Naive thymus-derived CD4-positive, alpha-beta T cell (primary cell): ENCODE measurements at regions of chr6 and their contacts with region 1.

Region 1: DNA sequence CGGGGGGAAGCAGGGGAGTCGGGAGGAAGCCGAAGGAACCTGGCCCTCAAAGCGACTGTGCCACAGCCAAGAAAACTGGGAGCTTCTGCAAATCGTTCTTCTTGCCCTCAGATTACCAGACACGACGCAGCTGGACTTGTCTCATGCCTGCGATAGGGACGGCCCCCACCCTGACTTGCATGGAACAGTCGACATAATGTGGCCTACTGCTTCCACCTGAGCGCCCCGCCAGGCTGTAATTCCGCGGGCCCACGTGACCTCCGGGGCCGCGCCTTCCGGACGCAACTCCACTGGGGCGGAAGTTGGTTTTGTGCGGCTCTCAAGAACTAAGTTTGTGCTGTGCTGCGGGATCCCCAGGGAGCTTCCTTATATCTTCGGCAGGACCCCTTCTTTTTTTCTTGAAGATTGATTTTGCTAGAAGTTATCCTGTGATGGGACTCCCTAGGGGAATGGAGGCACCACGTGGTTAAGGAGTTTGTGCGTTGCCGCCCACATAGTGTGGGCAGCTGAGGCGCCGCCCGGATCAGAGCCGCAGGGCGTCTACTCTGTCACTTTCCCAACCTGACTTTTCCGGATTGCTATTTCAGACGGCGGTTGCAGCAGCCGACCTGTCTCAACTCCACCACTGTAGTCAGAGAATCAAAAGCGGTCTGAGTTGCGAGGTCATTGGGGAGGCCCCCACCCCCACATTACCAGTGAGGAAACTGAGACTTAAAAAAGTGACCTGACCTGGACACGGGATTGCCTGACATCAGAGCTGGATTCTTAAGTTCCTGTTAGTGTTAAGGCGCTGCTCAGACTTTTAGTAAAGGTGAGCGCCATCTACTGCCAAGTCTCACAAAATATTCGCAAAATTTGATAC is 540 bp upstream of the CD164 start:
- DNase-seq: peak; percentile 90 to 97 (median 96)
- ATAC-seq: peak; percentile 82
- H3K4me3 ChIP-seq: peak overlapping the region; percentile 89
- H3K4me3 Mint-ChIP-seq: peak overlapping the region; percentile 88 to 99 (median 98)
- H3K27ac ChIP-seq: peak overlapping the region; percentile 95
- H3K27ac Mint-ChIP-seq: peak overlapping the region; percentile 92 to 100 (median 99)
- H3K4me1 ChIP-seq: peaks cover 22 to 32% of the 10 kb centered on the region in 2 donors
- H3K4me1 Mint-ChIP-seq: peaks cover 34 to 58% (median 51%) of the 10 kb centered on the region in 7 donors
- H3K27me3 ChIP-seq: no peaks in the 10 kb centered on the region
- H3K27me3 Mint-ChIP-seq: peaks cover 0 to 7% (median 0%) of the 10 kb centered on the region in 5 donors

Region 2: DNA sequence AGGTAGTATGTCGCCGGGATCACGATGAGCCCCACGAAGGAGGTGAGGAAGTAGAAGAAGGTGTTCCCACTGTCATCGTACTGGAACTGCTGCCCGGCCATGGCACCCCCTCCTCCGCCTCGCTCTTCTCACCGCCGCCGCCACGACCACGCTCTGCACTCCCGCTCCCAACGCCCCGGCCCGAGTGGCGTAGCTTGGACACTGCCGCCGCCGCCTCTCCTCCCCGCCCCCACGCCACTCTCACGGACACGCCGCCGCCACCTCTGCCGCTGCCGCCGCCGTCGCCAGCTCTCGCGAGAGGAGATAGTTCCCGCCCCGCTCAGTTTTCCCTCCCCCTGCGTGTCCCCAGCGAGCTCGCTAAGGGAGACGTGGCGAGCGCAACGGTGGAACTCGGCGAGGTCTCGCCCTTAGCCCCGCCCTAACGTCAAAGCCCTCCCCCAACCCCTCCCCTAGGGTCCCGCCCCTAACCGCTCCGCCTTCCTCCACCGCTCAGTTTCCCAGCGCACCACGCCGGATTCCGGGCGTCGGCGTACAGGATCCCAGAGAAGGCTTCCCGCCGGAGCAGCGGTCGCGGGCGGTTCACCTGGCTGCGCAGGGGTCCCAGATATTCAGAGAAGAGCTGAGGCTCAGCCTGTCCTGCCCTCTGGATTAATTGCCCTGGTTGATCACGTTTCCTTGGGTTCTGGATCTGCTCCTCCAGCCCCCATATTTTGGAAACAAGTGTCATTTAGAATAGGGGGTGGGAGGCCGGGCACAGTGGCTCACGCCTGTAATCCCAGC is 1424.7 kb before region 1 on chr6 and contains the start of gene SEC63:
- CTCF ChIA-PET with region 1: no interaction called
- POLR2A ChIA-PET with region 1: no interaction called
- intact Hi-C with region 1: loop called (anchors 1 to 2 kb)
- DNase-seq: peak; percentile 92 to 97 (median 96)
- ATAC-seq: peak; percentile 100
- H3K4me3 ChIP-seq: peak within 1 kb of the TSS; percentile 96
- H3K4me3 Mint-ChIP-seq: peak within 1 kb of the TSS; percentile 94 to 100 (median 99)
- H3K27ac ChIP-seq: peak within 1 kb of the TSS; percentile 86
- H3K27ac Mint-ChIP-seq: peak within 1 kb of the TSS; percentile 80 to 98 (median 96)
- H3K4me1 ChIP-seq: peaks cover 15 to 17% of the 10 kb centered on the region in 2 donors
- H3K4me1 Mint-ChIP-seq: peaks cover 20 to 35% (median 29%) of the 10 kb centered on the region in 7 donors
- H3K27me3 ChIP-seq: no peaks in the 10 kb centered on the region
- H3K27me3 Mint-ChIP-seq: peaks cover 0 to 5% (median 0%) of the 10 kb centered on the region in 5 donors
- total RNA-seq, gene SEC63: 82.9 to 89.0 (median 86.0) TPM

Region 3: DNA sequence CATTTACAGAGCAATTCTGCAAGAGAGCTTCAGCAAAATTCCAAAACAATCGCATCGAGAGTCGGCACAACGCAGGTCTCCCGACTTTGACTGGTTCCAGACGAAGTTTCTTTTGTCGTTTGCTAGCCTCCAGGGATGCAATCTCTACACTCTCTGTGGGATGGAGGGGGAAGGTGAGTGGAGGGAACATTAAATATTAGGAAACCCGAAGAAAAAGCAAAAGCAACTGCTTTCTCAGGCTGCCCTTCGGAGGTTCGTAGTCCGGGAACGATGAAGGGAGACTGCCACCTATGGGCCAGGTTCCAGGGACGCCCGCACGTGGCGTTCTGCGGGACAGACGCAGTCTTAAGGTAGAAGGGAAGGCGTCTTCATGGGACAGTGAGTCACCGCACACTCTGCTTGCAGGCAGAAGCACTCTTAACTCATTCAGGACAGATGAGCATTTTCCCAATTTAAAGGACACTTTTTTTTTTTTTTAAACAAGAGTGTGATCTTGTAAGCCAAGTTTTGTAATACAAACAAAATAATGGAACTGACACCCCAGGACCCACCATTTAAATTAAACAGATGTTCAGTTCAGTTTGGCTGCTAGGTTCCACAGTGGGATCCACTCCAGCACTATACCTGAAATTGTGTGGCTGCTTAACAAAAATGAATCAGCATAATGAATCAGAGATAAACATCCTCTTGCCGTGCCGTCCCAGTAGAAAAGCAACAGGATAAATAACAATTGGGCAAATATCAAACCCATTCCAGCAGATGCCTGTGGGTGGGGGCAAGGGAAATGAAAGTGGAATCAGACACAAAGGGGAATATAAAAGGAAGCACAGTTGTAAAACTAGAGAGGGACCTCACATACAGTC is 600.4 kb before region 1 on chr6:
- CTCF ChIA-PET with region 1: no interaction called
- POLR2A ChIA-PET with region 1: no interaction called
- intact Hi-C with region 1: loop called in 1 of 2 experiments (anchors 2 kb)
- DNase-seq: peak; percentile 56 to 76 (median 71)
- ATAC-seq: peak; percentile 98
- H3K4me3 ChIP-seq: peak overlapping the region; percentile 52
- H3K4me3 Mint-ChIP-seq: peak overlapping the region; percentile 46 to 93 (median 87)
- H3K27ac ChIP-seq: no peak overlapping the region
- H3K27ac Mint-ChIP-seq: peak overlapping the region in 3 of 9 donors; percentile 47 to 64 (median 51)
- H3K4me1 ChIP-seq: no peaks in the 10 kb centered on the region
- H3K4me1 Mint-ChIP-seq: peaks cover 0 to 17% (median 10%) of the 10 kb centered on the region in 7 donors
- H3K27me3 ChIP-seq: no peaks in the 10 kb centered on the region
- H3K27me3 Mint-ChIP-seq: peaks cover 0 to 73% (median 5%) of the 10 kb centered on the region in 5 donors

Region 4: DNA sequence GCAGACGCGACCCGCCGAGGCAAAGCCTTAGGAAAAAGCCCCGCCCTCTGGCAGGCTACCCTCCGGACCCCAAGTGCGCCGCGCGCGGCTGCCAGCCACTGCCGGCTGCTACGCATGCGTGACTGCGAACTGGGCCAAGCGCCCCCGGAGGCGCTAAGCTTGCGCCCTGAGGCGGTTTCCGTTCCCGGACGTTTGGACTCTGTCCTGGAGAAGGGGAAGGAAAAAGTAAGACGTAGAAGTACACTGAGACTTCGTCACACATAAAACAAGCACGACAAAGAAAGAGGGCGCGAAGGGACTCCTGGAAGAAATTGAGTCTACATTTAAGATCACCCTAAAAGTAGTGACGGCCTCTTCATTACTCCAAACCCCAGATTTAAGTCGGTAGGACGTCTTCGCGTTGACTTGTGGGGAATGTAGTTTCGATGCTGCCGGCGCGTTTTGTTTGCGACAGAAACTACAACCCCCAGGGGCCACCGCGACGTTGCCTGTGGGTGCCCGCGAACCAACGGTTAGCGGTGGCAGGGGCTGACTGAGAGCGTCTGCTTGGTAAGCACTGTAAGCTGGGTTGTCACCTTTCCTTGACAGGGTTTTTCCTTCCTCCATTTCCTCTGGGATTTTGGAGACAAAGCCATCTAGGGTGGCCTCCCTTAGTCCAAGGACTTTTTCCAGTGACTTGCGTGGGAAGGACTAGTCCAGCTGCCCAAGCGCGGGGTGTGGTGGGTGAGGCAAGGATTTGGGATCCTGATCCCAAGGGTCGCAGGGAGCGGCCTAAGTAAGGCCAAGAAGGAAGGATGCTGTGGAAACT is 287.6 kb before region 1 on chr6 and contains the start of gene CEP57L1:
- CTCF ChIA-PET with region 1: no interaction called
- POLR2A ChIA-PET with region 1: interaction called, 34 read pairs
- intact Hi-C with region 1: loop called (anchors 1 kb)
- DNase-seq: peak; percentile 88 to 96 (median 94)
- ATAC-seq: peak; percentile 81
- H3K4me3 ChIP-seq: peak within 1 kb of the TSS; percentile 96
- H3K4me3 Mint-ChIP-seq: peak within 1 kb of the TSS; percentile 92 to 98 (median 96)
- H3K27ac ChIP-seq: peak within 1 kb of the TSS; percentile 94
- H3K27ac Mint-ChIP-seq: peak within 1 kb of the TSS; percentile 98 to 99 (median 99)
- H3K4me1 ChIP-seq: peaks cover 21 to 29% of the 10 kb centered on the region in 2 donors
- H3K4me1 Mint-ChIP-seq: peaks cover 26 to 64% (median 54%) of the 10 kb centered on the region in 7 donors
- H3K27me3 ChIP-seq: no peaks in the 10 kb centered on the region
- H3K27me3 Mint-ChIP-seq: no peaks in the 10 kb centered on the region
- total RNA-seq, gene CEP57L1: 3.1 to 17.2 (median 6.5) TPM

Region 5: GRCh38 chr6:109482905-109483735 is 100.3 kb after region 1 on chr6 and contains the start of gene ZBTB24:
- CTCF ChIA-PET with region 1: interaction called, 5 read pairs
- POLR2A ChIA-PET with region 1: interaction called, 28 read pairs
- intact Hi-C with region 1: loop called (anchors 1 kb)
- DNase-seq: peak; percentile 86 to 92 (median 89)
- ATAC-seq: peak; percentile 94
- H3K4me3 ChIP-seq: peak within 1 kb of the TSS; percentile 79
- H3K4me3 Mint-ChIP-seq: peak within 1 kb of the TSS; percentile 92 to 99 (median 97)
- H3K27ac ChIP-seq: peak within 1 kb of the TSS; percentile 84
- H3K27ac Mint-ChIP-seq: peak within 1 kb of the TSS; percentile 42 to 95 (median 91)
- H3K4me1 ChIP-seq: peaks cover 38 to 39% of the 10 kb centered on the region in 2 donors
- H3K4me1 Mint-ChIP-seq: peaks cover 38 to 55% (median 51%) of the 10 kb centered on the region in 7 donors
- H3K27me3 ChIP-seq: no peaks in the 10 kb centered on the region
- H3K27me3 Mint-ChIP-seq: peaks cover 0 to 7% (median 0%) of the 10 kb centered on the region in 5 donors
- total RNA-seq, gene ZBTB24: 10.2 to 26.6 (median 23.4) TPM

Region 6: GRCh38 chr6:110389689-110390382 is 1007.0 kb after region 1 on chr6:
- CTCF ChIA-PET with region 1: no interaction called
- POLR2A ChIA-PET with region 1: no interaction called
- intact Hi-C with region 1: loop called in 1 of 2 experiments (anchors 1 kb)
- DNase-seq: no peak
- ATAC-seq: peak; percentile 67
- H3K4me3 ChIP-seq: no peak overlapping the region
- H3K4me3 Mint-ChIP-seq: peak overlapping the region in 1 of 10 donors; percentile 32
- H3K27ac ChIP-seq: no peak overlapping the region
- H3K27ac Mint-ChIP-seq: peak overlapping the region in 6 of 9 donors; percentile 7 to 85 (median 54)
- H3K4me1 ChIP-seq: peaks cover 0 to 3% of the 10 kb centered on the region in 2 donors
- H3K4me1 Mint-ChIP-seq: peaks cover 9 to 27% (median 23%) of the 10 kb centered on the region in 7 donors
- H3K27me3 ChIP-seq: no peaks in the 10 kb centered on the region
- H3K27me3 Mint-ChIP-seq: no peaks in the 10 kb centered on the region